ENCODE measurements at regions of chr2 and their contacts with region 1.

Region 1: DNA sequence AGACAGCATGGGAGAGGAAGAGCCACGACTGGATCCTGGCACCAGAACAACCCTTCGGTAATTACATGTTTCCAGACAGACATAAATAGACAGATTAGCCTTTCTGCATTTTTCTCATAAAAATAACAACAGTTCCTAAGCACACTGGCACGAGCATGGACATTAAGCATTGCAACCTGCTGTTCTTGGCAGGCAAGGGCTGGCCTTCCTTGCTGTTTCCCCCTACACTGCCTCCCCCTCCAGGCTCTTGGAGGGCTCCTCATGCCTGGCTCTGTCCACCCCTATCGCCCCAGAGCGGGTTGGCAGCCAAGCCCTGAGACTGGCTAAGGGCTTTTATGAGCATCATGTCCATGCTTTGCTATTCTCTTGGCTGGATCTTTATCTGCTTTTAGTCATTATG is 89.6 kb downstream of the TTC32 start:
- DNase-seq: peak in 1 of 2 donors; percentile 89
- H3K4me3 ChIP-seq: no peak overlapping the region
- H3K27ac ChIP-seq: peak overlapping the region; percentile 82 to 89
- H3K4me1 ChIP-seq: peaks cover 0 to 38% of the 10 kb centered on the region in 2 donors
- H3K27me3 ChIP-seq: no peaks in the 10 kb centered on the region
- CTCF ChIP-seq: no peak

Region 2: GRCh38 chr2:19754907-19755306 is 57.3 kb before region 1 on chr2:
- intact Hi-C with region 1: loop called (anchors 5 kb)
- DNase-seq: peak in 1 of 2 donors; percentile 45
- H3K4me3 ChIP-seq: no peak overlapping the region
- H3K27ac ChIP-seq: no peak overlapping the region
- H3K4me1 ChIP-seq: peaks cover 4 to 7% of the 10 kb centered on the region in 2 donors
- H3K27me3 ChIP-seq: no peaks in the 10 kb centered on the region
- CTCF ChIP-seq: no peak

Measured in ascending aorta (tissue), 2 donors.